ENCODE measurements at regions of chr3 and their contacts with region 1.

Region 1: GRCh38 chr3:9815986-9816385 is 5.9 kb downstream of the TTLL3 start:
- DNase-seq: no peak
- H3K4me3 ChIP-seq: no peak overlapping the region
- H3K27ac ChIP-seq: no peak overlapping the region
- H3K4me1 ChIP-seq: no peaks in the 10 kb centered on the region
- H3K27me3 ChIP-seq: no peaks in the 10 kb centered on the region
- CTCF ChIP-seq: no peak
- POLR2A ChIP-seq: no peak

Region 2: DNA sequence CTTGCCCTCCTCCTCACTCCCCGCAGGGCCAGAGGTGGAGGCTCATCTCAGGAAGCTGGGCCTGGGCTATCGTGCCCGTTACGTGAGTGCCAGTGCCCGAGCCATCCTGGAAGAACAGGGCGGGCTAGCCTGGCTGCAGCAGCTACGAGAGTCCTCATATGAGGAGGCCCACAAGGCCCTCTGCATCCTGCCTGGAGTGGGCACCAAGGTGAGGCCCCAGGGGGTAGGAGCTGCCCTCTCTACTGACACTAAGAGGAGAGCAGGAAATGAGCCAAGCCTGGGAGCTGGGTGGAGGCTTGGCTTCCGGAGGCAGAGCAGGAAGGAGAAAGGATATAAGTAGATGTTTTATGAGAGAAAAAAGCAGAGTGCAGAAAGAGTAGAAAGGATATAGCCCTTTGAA is 61.3 kb before region 1 on chr3:
- intact Hi-C with region 1: no loop called
- DNase-seq: no peak
- H3K4me3 ChIP-seq: no peak overlapping the region
- H3K27ac ChIP-seq: peak overlapping the region in 1 of 2 donors; percentile 41
- H3K4me1 ChIP-seq: peaks cover 0 to 14% of the 10 kb centered on the region in 2 donors
- H3K27me3 ChIP-seq: no peaks in the 10 kb centered on the region
- CTCF ChIP-seq: no peak
- POLR2A ChIP-seq: no peak

Region 3: DNA sequence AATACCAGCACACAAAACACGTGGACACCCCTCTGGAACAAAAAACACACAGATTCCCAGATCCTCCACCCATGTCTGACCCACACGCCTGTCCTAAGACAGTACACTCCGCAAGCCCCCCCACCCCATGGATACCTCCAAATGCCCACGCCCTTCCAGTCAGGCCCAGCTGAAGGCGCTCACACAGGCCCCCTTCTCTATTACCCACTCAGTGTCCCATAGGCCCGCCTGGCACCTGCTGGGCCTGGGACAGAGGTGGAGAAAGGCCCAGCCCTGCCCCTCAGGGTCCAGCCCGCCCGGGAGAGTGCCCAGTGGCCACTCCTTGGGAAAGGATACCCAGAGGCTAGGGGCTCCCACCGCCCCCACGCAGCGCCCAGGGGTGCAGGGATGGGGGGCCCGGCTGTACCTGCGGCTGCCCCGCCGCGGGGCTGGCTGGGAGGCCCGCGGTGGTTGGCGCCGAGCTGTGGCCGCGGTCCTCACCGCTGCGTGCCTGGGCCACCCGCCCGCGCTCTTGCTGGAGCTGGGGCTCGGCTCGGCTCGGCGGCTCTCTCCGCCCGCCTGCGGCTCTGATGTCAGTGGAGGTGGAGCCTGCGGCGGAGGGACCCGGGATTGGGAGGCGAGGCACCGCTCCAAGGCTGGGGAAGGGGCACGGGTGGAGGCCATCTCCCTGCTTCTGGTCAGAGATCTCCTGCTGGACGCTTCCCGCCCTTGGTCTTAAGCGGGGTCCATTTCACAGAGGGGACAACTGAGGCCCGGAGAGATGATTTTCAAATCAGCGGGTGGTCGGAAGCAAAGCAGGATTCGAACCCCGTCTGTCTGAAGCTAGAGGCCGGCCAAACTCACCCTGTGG is 46.3 kb before region 1 on chr3 and contains the start of gene CAMK1:
- intact Hi-C with region 1: loop called (anchors 1 kb)
- DNase-seq: peak; percentile 69 to 81
- H3K4me3 ChIP-seq: peak within 1 kb of the TSS; percentile 64 to 79 (median 78)
- H3K27ac ChIP-seq: peak within 1 kb of the TSS; percentile 79 to 93
- H3K4me1 ChIP-seq: peaks cover 0 to 3% of the 10 kb centered on the region in 2 donors
- H3K27me3 ChIP-seq: no peaks in the 10 kb centered on the region
- CTCF ChIP-seq: no peak
- POLR2A ChIP-seq: no peak
- total RNA-seq, gene CAMK1: 25.2 to 58.7 (median 40.0) TPM

Region 4: GRCh38 chr3:10867384-10867783 is 1051.4 kb after region 1 on chr3:
- intact Hi-C with region 1: no loop called
- DNase-seq: no peak
- H3K4me3 ChIP-seq: no peak overlapping the region
- H3K27ac ChIP-seq: no peak overlapping the region
- H3K4me1 ChIP-seq: no peaks in the 10 kb centered on the region
- H3K27me3 ChIP-seq: no peaks in the 10 kb centered on the region
- CTCF ChIP-seq: no peak
- POLR2A ChIP-seq: no peak